Lower leg skin (tissue), 4 donors: ENCODE measurements at regions of chr2 and their contacts with region 1.

Region 1: DNA sequence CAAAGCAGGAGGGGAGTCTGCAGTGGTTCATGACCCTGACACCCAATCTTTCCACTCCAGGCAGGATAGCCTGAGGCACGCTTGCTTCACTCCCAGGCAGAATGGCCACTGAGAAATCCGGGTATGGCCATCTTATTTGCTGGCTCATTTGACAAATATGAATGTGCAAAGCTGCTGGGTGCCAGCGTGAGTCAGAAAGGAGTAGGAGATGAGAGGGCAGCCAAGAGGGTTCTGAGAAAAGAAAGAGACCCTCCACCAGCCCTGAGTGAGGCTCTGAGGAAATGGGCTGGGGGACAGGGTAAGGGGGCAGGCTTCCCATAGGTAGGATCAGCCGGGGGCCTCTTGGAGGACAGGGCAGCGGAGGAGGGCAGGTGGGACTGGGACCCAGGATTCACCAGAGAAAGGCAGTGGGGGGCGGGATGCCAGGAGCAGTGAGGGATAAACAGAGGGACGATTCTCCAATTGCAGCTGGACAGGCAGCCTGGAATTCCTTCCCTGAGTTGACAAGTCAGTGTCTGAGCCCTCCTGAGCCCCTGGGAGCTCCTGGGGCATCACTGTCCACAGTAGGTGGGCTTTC is 15.2 kb downstream of the RAMP1 start:
- DNase-seq: peak in 1 of 2 donors; percentile 64
- H3K4me3 ChIP-seq: no peak overlapping the region
- CTCF ChIP-seq: no peak
- POLR2A ChIP-seq: no peak

Region 2: GRCh38 chr2:237752761-237753165 is 121.9 kb before region 1 on chr2:
- intact Hi-C with region 1: no loop called
- DNase-seq: peak in 1 of 2 donors; percentile 70
- H3K4me3 ChIP-seq: no peak overlapping the region
- CTCF ChIP-seq: no peak
- POLR2A ChIP-seq: no peak

Region 3: GRCh38 chr2:237895544-237896506 is 21.2 kb after region 1 on chr2:
- intact Hi-C with region 1: no loop called
- DNase-seq: peak; percentile 58 to 91
- H3K4me3 ChIP-seq: no peak overlapping the region
- CTCF ChIP-seq: no peak
- POLR2A ChIP-seq: no peak

Region 4: GRCh38 chr2:238239872-238240751 is 365.4 kb after region 1 on chr2 and contains the start of gene HES6:
- intact Hi-C with region 1: loop called (anchors 10 kb)
- DNase-seq: peak; percentile 80 to 96
- H3K4me3 ChIP-seq: peak within 1 kb of the TSS; percentile 50
- CTCF ChIP-seq: no peak
- POLR2A ChIP-seq: no peak
- total RNA-seq, gene HES6: 1.3 to 5.8 (median 3.1) TPM

Region 5: GRCh38 chr2:239594019-239594772 is 1719.5 kb after region 1 on chr2:
- intact Hi-C with region 1: no loop called
- DNase-seq: peak in 1 of 2 donors; percentile 79
- H3K4me3 ChIP-seq: no peak overlapping the region
- CTCF ChIP-seq: no peak
- POLR2A ChIP-seq: no peak